Activated CD8-positive, alpha-beta memory T cell treated with anti-CD3 and anti-CD28 coated beads, Interleukin-2, amount 10 ng/mL, durations not matched to agents 7 days and 5 days (primary cell): ENCODE measurements at regions of chr17 and their contacts with region 1.

Region 1: GRCh38 chr17:49315551-49316257 is 46.3 kb downstream of the ZNF652 start:
- DNase-seq: peak; percentile 90
- ATAC-seq: peak; percentile 100
- H3K4me3 Mint-ChIP-seq: peak overlapping the region; percentile 65
- H3K27ac Mint-ChIP-seq: peak overlapping the region; percentile 68
- H3K4me1 Mint-ChIP-seq: peaks cover 38% of the 10 kb centered on the region
- H3K27me3 Mint-ChIP-seq: no peaks in the 10 kb centered on the region

Region 2: DNA sequence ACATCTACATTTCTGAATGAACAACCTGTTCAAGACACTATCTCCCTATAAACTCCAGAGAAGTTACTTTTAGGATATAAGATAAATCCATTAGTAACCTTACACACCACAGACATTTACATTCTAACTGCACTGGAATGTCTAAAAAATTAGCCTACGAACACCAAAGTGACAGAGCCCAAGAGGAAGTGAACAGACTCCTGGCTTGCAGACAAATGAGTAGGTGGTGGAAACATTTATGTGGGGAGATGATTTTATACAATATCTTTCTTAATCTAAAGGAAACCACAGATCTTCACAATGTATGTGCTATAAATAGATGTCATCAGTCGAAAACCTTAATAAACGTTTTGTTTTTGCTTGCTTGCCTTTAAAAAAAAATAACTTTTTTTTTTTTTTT is 27.6 kb after region 1 on chr17:
- CTCF ChIA-PET with region 1: interaction called, 35 read pairs
- DNase-seq: no peak
- ATAC-seq: peak; percentile 67
- H3K4me3 Mint-ChIP-seq: peak overlapping the region; percentile 64
- H3K27ac Mint-ChIP-seq: peak overlapping the region; percentile 98
- H3K4me1 Mint-ChIP-seq: peaks cover 74% of the 10 kb centered on the region
- H3K27me3 Mint-ChIP-seq: peaks cover 5% of the 10 kb centered on the region

Region 3: DNA sequence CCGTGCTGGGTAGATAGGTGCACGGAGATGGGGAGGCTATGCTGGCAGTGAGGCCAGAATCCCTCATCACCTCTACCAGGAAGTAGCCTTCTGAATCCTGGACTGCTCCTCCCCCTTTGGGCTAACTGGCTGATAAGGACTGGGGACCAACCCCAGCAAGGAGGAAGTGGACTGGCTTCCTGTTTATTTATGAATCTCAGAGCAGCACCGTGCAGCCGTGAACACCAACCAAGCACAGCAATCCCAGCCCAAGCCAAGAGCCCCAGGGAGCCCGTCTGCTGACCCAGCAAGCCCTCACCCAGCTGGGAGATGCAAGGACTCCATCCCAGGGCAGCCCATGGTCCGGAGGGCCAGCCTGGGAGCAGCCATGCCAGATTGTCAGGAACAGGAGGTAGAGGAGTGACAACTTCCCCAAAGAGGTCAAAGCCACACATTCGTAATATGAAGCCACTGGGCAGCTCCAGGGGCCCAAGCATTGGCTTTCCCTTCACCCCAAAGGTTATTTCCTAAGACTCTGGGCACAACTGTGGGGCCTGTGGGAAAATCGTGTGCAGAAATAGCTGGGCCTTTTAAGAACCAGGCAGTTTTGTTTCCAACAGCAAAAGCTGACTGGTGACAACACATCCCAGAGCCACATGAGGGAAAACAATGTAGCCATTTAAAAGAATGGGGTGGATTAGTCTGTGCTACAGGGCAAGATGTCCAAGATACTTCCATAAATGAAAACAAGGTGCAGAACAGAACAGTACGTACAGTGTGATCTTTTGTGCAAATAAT is 75.0 kb after region 1 on chr17:
- CTCF ChIA-PET with region 1: interaction called, 64 read pairs
- DNase-seq: peak; percentile 50
- ATAC-seq: peak; percentile 40
- H3K4me3 Mint-ChIP-seq: peak overlapping the region; percentile 45
- H3K27ac Mint-ChIP-seq: peak overlapping the region; percentile 95
- H3K4me1 Mint-ChIP-seq: peaks cover 68% of the 10 kb centered on the region
- H3K27me3 Mint-ChIP-seq: no peaks in the 10 kb centered on the region

Region 4: DNA sequence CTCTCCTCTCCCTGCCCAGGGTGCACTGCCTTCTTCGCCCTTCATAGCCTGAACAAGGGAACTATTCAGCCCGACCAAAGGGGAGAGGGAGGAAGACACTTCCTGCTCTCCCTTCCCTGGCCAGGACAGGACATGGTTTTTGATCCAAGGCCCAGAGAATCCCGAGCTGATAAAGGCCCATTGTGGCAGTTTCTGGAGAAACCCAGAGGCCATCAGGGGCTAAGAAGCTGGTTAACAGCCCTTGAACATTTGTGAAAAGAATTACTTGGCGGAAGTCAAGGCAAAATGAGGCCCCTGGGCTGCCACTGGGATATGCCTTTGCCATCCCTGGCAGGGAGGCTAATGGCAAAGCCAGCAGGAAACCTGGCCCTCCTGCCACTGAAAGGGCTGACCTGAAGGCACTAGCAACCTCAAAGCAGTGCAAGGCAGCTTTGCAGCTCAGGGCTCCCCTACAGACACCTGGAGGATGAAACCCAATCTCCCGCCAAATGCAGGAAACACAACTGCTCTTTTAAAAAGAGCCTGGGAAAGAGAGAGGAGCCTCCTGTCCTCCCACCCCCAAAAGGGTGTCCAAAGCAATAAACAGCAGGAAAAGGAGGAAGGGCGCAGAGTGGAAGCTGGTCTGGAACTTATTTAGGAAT is 86.4 kb after region 1 on chr17:
- CTCF ChIA-PET with region 1: interaction called, 64 read pairs
- DNase-seq: no peak
- ATAC-seq: no peak
- H3K4me3 Mint-ChIP-seq: no peak overlapping the region
- H3K27ac Mint-ChIP-seq: no peak overlapping the region
- H3K4me1 Mint-ChIP-seq: peaks cover 41% of the 10 kb centered on the region
- H3K27me3 Mint-ChIP-seq: peaks cover 3% of the 10 kb centered on the region